Esophagus squamous epithelium (tissue), 5 donors: ENCODE measurements at regions of chr5 and their contacts with region 1.

Region 1: GRCh38 chr5:172770675-172771438 is at the start of gene DUSP1:
- DNase-seq: peak; percentile 99
- H3K4me3 ChIP-seq: peak within 1 kb of the TSS; percentile 77 to 96 (median 79)
- H3K27ac ChIP-seq: peak within 1 kb of the TSS; percentile 96 to 100 (median 99)
- H3K4me1 ChIP-seq: peaks cover 35 to 82% (median 44%) of the 10 kb centered on the region in 3 donors
- H3K27me3 ChIP-seq: no peaks in the 10 kb centered on the region
- CTCF ChIP-seq: peak in 4 of 6 experiments; percentile 59 to 67 (median 61)
- POLR2A ChIP-seq: peak; percentile 92 to 100 (median 97)
- total RNA-seq, gene DUSP1: 222 to 415 (median 252) TPM

Region 2: DNA sequence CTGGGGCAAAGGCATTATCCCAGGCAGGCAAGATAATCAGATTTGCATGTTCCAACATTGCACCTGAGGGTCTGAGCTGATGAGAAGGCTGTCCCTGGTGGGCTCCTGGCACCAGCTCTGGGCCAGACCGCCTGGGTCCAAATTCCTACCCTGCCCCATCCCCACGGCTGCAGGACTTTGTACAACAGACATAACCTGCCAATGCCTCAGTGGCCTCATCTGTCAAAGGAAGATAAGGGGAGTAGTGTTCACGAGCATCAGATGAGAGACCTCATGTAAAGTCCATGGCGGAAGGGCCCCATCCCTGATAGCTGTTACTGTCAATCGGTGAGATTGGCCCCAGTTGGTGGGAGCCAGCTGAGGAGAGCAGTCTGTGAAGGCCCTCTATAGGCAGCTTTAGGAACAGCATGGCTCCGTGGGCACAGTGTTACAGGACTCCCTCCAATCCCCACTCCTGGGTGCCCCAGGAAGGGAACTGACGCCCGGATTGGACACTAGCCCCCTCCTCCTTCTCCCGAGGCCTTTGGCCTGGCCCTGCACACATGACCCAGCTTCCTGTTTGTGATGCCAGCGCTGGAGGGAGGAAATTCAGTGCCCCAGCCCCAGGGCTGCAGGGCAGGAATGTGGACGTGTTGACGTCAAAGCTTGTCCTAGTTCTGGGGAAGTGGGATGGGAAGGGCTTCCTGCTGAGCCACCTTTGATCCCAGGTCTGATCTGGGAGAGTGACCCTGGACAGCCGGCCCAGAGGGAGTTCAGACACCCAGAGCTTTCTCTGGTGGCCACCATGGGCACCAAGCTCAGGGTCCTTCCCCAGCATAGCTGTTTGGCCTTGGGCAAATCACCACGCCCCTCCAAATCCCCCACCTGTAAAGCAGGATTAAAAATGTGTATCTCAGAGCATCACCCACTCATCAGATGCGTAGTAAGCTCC is 56.1 kb before region 1 on chr5:
- intact Hi-C with region 1: loop called (anchors 5 kb)
- DNase-seq: no peak
- H3K4me3 ChIP-seq: no peak overlapping the region
- H3K27ac ChIP-seq: peak overlapping the region; percentile 54 to 86 (median 78)
- H3K4me1 ChIP-seq: peaks cover 19 to 61% (median 33%) of the 10 kb centered on the region in 3 donors
- H3K27me3 ChIP-seq: peaks cover 0 to 4% (median 0%) of the 10 kb centered on the region in 4 donors
- CTCF ChIP-seq: peak; percentile 65 to 89 (median 86)
- POLR2A ChIP-seq: no peak

Region 3: GRCh38 chr5:172868924-172869591 is 98.2 kb after region 1 on chr5:
- intact Hi-C with region 1: loop called (anchors 10 kb)
- DNase-seq: no peak
- H3K4me3 ChIP-seq: peak overlapping the region in 1 of 4 donors; percentile 19
- H3K27ac ChIP-seq: peak overlapping the region; percentile 76 to 94 (median 92)
- H3K4me1 ChIP-seq: peaks cover 48 to 88% (median 69%) of the 10 kb centered on the region in 3 donors
- H3K27me3 ChIP-seq: no peaks in the 10 kb centered on the region
- CTCF ChIP-seq: peak in 3 of 6 experiments; percentile 16 to 19 (median 18)
- POLR2A ChIP-seq: peak in 1 of 4 donors; percentile 25

Region 4: DNA sequence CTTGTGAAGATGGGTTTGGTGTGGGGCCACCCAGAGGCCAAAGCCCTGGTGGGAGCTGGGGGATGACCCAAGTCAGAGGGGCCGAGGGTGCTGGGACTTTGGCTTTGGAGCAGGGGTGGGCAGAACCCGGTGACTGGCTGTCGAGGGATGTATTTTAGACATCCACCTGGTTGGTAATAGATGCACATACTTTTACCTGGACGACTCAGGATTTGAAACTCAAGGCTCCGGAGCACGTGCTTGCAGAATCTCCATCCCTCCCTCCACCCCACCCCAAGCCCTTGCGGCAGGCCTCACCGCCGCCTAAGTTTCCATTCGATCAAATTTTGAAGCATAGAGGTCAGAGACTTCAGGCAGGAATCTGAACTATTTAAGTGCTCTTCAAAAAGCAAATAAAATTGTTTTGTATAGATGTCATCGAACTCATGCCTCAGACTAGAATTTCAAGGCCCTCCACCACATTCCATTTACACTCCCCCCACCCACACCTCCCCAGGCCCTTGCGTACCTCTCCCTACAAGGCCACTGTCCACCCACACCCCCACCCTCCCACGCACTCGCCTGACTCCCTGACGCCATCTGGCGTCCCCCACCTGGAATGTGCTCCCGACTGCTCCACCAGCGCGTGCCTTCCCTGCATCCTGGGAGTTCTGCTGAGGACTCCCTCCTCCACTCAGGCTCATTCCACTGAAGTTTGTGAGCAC is 131.8 kb after region 1 on chr5:
- intact Hi-C with region 1: loop called (anchors 10 kb)
- DNase-seq: no peak
- H3K4me3 ChIP-seq: no peak overlapping the region
- H3K27ac ChIP-seq: peak overlapping the region; percentile 86 to 96 (median 92)
- H3K4me1 ChIP-seq: peaks cover 49 to 88% (median 60%) of the 10 kb centered on the region in 3 donors
- H3K27me3 ChIP-seq: no peaks in the 10 kb centered on the region
- CTCF ChIP-seq: peak in 3 of 6 experiments; percentile 23 to 35 (median 30)
- POLR2A ChIP-seq: no peak